ENCODE measurements at regions of chrX and their contacts with region 1.

Region 1: DNA sequence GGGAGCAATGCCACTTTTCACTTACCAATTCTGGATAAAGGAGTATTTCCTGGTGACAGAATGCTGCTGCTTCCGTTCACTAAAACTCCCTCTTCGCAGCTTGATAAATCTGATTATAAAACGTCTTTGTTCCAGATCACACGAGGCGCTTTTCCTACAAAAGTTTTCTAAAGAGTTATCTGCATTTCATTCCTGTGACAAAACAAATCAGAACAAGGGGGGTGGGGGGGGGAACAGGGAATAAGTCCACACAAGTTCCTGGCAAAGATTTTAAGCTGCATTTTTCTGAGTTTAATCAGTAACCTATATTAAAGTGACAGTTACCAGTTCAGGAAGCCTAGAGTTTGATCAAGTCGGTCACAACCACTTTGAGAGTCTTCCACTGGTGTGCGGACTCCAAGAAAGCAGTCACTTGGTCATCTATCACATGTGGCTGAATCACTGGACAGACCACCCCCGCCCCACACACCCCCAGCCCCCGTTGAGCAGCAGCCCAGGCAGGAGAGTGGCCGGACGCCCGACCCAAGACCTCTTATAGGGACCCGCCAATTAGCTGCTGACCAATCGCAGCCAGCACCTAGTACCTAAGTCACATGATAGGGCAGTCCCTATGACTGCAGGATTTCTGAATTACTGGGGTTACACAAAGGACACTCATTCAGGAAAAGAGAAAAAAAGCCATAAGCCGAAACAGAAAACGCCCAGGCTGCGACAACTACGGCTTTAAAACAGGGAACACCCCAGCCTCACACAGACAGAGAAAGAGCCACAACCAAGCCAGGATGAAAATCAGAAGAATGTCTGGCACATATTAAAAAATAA is 569.3 kb upstream of the DIPK2B start:
- DNase-seq: peak; percentile 83 to 93 (median 85)
- H3K4me3 ChIP-seq: peak overlapping the region; percentile 52 to 97 (median 76)
- H3K4me3 Mint-ChIP-seq: peak overlapping the region; percentile 79 to 90
- H3K27ac ChIP-seq: peak overlapping the region in 1 of 2 donors; percentile 73
- H3K27ac Mint-ChIP-seq: peak overlapping the region; percentile 76 to 93 (median 90)
- H3K4me1 ChIP-seq: peaks cover 38 to 47% of the 10 kb centered on the region in 2 donors
- H3K4me1 Mint-ChIP-seq: peaks cover 42% of the 10 kb centered on the region
- H3K27me3 ChIP-seq: peaks cover 0 to 65% of the 10 kb centered on the region in 2 donors
- H3K27me3 Mint-ChIP-seq: peaks cover 0 to 45% (median 0%) of the 10 kb centered on the region in 3 donors
- CTCF ChIP-seq: no peak

Region 2: DNA sequence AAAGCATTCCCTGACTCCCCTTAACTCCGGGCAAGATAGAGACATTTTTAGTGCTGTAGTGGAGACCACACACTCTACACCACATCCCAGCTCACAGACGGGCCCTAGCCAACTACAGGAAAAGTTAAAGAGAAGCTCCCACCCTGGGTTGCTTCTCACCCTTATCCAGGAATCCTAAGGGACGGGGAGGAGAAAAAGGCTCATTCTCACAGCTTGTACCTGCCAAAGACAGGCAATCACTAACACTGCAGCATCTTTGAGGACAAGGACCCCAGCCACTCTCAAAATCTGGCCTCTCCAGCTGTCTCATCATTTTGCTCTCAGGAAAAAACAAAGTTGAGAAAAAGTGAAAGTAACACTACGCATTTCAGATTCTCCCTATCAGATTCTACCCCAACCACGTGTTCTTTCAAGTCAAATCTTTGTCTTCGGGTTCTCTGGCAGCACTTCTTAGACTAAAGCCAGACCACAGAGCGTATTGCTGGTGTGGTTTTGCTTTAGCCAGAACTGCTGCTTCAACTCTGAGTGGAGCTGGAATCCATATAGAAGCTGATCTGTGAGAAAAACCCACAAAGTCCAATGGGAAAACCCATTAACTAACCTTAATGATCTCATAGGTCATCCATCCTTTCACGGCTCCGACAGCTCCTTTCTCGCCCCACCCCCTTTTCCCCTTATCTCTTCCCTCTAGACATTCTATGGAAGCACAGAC is 36.6 kb after region 1 on chrX:
- intact Hi-C with region 1: loop called in 1 of 2 experiments (anchors 5 kb)
- DNase-seq: peak in 1 of 3 donors; percentile 43
- H3K4me3 ChIP-seq: peak overlapping the region; percentile 17 to 64 (median 44)
- H3K4me3 Mint-ChIP-seq: peak overlapping the region; percentile 73 to 80
- H3K27ac ChIP-seq: peak overlapping the region in 1 of 2 donors; percentile 59
- H3K27ac Mint-ChIP-seq: peak overlapping the region; percentile 66 to 90 (median 77)
- H3K4me1 ChIP-seq: peaks cover 37 to 61% of the 10 kb centered on the region in 2 donors
- H3K4me1 Mint-ChIP-seq: peaks cover 45% of the 10 kb centered on the region
- H3K27me3 ChIP-seq: peaks cover 0 to 22% of the 10 kb centered on the region in 2 donors
- H3K27me3 Mint-ChIP-seq: peaks cover 0 to 35% (median 0%) of the 10 kb centered on the region in 3 donors
- CTCF ChIP-seq: no peak

Region 3: DNA sequence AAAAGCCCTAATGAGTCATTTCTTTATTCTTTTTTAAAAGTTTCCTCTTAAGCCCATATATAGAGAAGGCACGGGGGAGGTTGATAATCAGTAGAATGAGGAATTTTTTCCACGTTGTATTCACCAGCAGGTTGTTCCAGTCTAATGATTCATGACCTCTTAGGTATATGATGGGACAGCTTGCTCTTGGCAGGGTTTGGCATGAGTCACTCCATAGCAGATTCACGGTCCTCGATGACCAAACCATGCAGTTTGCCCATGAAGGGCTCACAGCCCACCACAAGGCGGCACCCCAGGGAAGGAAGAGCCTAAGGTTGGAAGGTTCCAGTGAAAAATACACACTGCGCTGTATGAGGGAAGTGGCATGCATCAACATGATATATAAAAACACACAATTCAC is 54.5 kb after region 1 on chrX:
- intact Hi-C with region 1: no loop called
- DNase-seq: peak in 1 of 3 donors; percentile 33
- H3K4me3 ChIP-seq: no peak overlapping the region
- H3K4me3 Mint-ChIP-seq: no peak overlapping the region
- H3K27ac ChIP-seq: no peak overlapping the region
- H3K27ac Mint-ChIP-seq: no peak overlapping the region
- H3K4me1 ChIP-seq: no peaks in the 10 kb centered on the region
- H3K4me1 Mint-ChIP-seq: no peaks in the 10 kb centered on the region
- H3K27me3 ChIP-seq: peaks cover 0 to 13% of the 10 kb centered on the region in 2 donors
- H3K27me3 Mint-ChIP-seq: peaks cover 0 to 39% (median 0%) of the 10 kb centered on the region in 3 donors
- CTCF ChIP-seq: no peak

Region 4: DNA sequence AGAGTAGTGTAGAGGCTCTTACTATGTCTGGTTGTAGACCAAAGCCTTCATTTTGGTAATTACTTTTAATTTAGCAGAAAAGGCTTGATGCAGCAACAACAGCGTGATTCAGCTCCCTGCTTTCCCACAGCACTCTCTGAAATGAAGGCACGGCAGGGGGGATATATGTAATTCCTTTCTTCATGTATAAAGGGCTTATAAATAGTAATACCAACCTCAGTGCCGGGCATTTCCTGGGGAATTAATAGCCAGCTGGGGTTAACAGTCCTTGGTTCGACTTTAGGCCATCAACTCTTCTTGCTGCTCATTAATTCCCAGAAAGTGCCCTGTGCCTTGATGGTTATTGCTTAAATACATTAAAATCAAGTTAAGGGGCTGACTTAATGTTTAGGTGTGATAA is 106.2 kb after region 1 on chrX:
- intact Hi-C with region 1: no loop called
- DNase-seq: no peak
- H3K4me3 ChIP-seq: no peak overlapping the region
- H3K4me3 Mint-ChIP-seq: no peak overlapping the region
- H3K27ac ChIP-seq: no peak overlapping the region
- H3K27ac Mint-ChIP-seq: no peak overlapping the region
- H3K4me1 ChIP-seq: no peaks in the 10 kb centered on the region
- H3K4me1 Mint-ChIP-seq: no peaks in the 10 kb centered on the region
- H3K27me3 ChIP-seq: peaks cover 0 to 25% of the 10 kb centered on the region in 2 donors
- H3K27me3 Mint-ChIP-seq: peaks cover 0 to 9% (median under 1%) of the 10 kb centered on the region in 3 donors
- CTCF ChIP-seq: no peak

Region 5: DNA sequence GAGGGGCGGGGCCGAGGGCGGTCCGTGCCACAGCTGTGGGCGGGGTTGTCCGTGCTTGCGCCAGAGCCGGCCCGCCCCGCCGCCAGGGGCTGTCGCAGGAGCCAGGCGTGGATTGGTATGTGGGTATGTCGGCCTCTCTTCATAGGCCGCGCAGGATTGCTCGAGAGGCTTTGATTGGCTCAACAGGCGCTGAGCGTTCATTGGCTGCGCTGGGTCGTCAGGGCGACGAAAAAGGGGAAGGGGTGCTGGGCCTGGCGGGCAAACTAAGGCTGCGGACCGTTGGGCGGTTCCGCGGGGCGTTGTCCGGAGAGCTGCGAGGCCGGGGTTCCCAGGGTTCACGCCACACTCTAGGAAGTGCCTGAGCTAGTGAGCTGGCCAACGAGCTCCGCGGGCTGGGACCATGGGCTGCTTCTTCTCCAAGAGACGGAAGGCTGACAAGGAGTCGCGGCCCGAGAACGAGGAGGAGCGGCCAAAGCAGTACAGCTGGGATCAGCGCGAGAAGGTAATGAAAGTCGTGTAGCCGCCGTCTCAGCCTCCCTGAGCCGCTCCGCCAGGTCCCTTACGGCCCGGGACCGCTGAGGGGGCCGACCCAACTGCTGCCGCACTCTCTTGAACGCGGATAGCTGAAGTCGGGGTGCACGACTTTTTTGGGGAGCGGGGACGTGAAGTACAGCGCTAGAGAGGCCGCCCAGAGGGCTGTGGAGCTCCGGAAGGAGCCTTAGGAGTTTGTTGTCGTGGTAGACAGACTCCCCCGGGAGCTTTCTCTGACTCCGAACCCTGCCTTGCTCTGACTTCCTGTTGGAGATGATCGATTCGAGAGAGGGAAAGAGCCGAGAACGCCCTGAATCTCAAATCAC is 1067.0 kb after region 1 on chrX and contains the start of gene RP2:
- intact Hi-C with region 1: loop called in 1 of 2 experiments (anchors 10 kb)
- DNase-seq: peak; percentile 92 to 97 (median 95)
- H3K4me3 ChIP-seq: peak within 1 kb of the TSS; percentile 94 to 96 (median 95)
- H3K4me3 Mint-ChIP-seq: peak within 1 kb of the TSS; percentile 98 to 99
- H3K27ac ChIP-seq: peak within 1 kb of the TSS; percentile 94 to 98
- H3K27ac Mint-ChIP-seq: peak within 1 kb of the TSS; percentile 97 to 100 (median 98)
- H3K4me1 ChIP-seq: peaks cover 48 to 64% of the 10 kb centered on the region in 2 donors
- H3K4me1 Mint-ChIP-seq: peaks cover 39% of the 10 kb centered on the region
- H3K27me3 ChIP-seq: no peaks in the 10 kb centered on the region
- H3K27me3 Mint-ChIP-seq: peaks cover 0 to 7% (median 1%) of the 10 kb centered on the region in 3 donors
- CTCF ChIP-seq: no peak
- polyA plus RNA-seq, gene RP2: 17.2 to 60.3 (median 55.7) TPM